Naive thymus-derived CD8-positive, alpha-beta T cell (primary cell): ENCODE measurements at regions of chr17 and their contacts with region 1.

Region 1: GRCh38 chr17:56653877-56654276 is 60.4 kb downstream of the NOG start:
- DNase-seq: peak; percentile 21 to 89 (median 71)
- ATAC-seq: peak; percentile 100
- H3K4me3 Mint-ChIP-seq: no peak overlapping the region
- H3K27ac Mint-ChIP-seq: peak overlapping the region in 8 of 10 donors; percentile 45 to 91 (median 75)
- H3K4me1 Mint-ChIP-seq: peaks cover 5 to 7% (median 6%) of the 10 kb centered on the region in 4 donors
- H3K27me3 Mint-ChIP-seq: peaks cover 0 to 3% (median 0%) of the 10 kb centered on the region in 5 donors

Region 2: GRCh38 chr17:56602292-56603130 is 51.4 kb before region 1 on chr17:
- POLR2A ChIA-PET with region 1: interaction called, 39 read pairs
- DNase-seq: peak; percentile 39 to 87 (median 63)
- ATAC-seq: peak; percentile 83 to 86
- H3K4me3 Mint-ChIP-seq: peak overlapping the region; percentile 20 to 77 (median 59)
- H3K27ac Mint-ChIP-seq: peak overlapping the region; percentile 97 to 100 (median 99)
- H3K4me1 Mint-ChIP-seq: peaks cover 54 to 83% (median 82%) of the 10 kb centered on the region in 4 donors
- H3K27me3 Mint-ChIP-seq: peaks cover 0 to 15% (median 0%) of the 10 kb centered on the region in 5 donors

Region 3: DNA sequence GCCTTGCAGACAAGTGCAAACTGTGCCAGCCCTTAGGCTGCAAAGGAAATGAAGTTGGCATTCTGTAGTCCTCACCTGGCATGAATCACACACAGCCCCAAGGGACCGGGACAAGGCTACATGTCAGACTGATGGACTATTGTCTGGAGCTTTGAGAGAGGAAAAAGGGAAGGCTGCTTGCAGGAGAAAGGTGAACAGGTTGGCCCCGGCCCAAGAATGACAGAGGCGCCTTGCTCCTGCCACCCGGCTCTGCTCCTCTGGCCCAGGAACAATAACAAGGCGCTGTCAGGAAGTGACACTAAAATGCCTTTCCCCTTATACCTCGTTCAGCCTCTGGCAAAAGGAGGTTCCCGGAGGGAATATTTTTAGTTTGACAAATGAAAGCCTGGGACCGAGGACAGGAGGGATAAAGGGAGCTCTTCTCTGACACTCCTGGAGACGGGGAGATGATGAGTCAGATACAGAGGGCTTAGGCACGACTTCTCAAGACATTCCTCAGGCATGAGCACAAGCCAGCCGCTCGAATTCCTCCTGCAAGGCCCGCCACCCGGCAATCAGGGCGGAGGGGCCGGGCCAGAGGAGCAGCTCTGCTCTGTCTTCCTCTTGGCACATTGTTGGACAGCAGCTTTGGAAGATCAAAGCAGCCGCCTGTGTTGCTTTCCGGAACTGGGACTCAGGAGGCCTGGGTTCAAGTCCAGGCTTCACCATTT is 45.5 kb after region 1 on chr17:
- POLR2A ChIA-PET with region 1: no interaction called
- DNase-seq: no peak
- ATAC-seq: no peak
- H3K4me3 Mint-ChIP-seq: no peak overlapping the region
- H3K27ac Mint-ChIP-seq: no peak overlapping the region
- H3K4me1 Mint-ChIP-seq: no peaks in the 10 kb centered on the region
- H3K27me3 Mint-ChIP-seq: peaks cover under 1 to 12% (median 3%) of the 10 kb centered on the region in 5 donors